CD8-positive, alpha-beta memory T cell (primary cell): ENCODE measurements at regions of chr1 and their contacts with region 1.

Region 1: GRCh38 chr1:248837794-248838356 is at the start of gene ZNF672:
- DNase-seq: peak; percentile 91 to 96 (median 92)
- H3K4me3 ChIP-seq: peak within 1 kb of the TSS; percentile 74
- H3K4me3 Mint-ChIP-seq: no peak within 1 kb of the TSS
- H3K27ac ChIP-seq: peak within 1 kb of the TSS; percentile 97
- H3K27ac Mint-ChIP-seq: peak within 1 kb of the TSS in 5 of 8 donors; percentile 98 to 100 (median 99)
- H3K4me1 ChIP-seq: peaks cover 28% of the 10 kb centered on the region
- H3K4me1 Mint-ChIP-seq: peaks cover 24 to 37% (median 36%) of the 10 kb centered on the region in 3 donors
- H3K27me3 ChIP-seq: no peaks in the 10 kb centered on the region
- H3K27me3 Mint-ChIP-seq: peaks cover 0 to 4% of the 10 kb centered on the region in 2 donors
- total RNA-seq, gene ZNF672: 52.1 to 55.2 TPM

Region 2: GRCh38 chr1:248825909-248826760 is 11.7 kb before region 1 on chr1 and contains the start of gene SH3BP5L:
- CTCF ChIA-PET with region 1: interaction called, 49 read pairs
- POLR2A ChIA-PET with region 1: interaction called, 31 read pairs
- DNase-seq: peak; percentile 84 to 94 (median 92)
- H3K4me3 ChIP-seq: peak within 1 kb of the TSS; percentile 98
- H3K4me3 Mint-ChIP-seq: peak within 1 kb of the TSS; percentile 89 to 99 (median 97)
- H3K27ac ChIP-seq: peak within 1 kb of the TSS; percentile 97
- H3K27ac Mint-ChIP-seq: peak within 1 kb of the TSS; percentile 92 to 100 (median 99)
- H3K4me1 ChIP-seq: peaks cover 51% of the 10 kb centered on the region
- H3K4me1 Mint-ChIP-seq: peaks cover 49 to 61% (median 60%) of the 10 kb centered on the region in 3 donors
- H3K27me3 ChIP-seq: no peaks in the 10 kb centered on the region
- H3K27me3 Mint-ChIP-seq: peaks cover 0 to 3% of the 10 kb centered on the region in 2 donors
- total RNA-seq, gene SH3BP5L: 20.1 to 21.8 TPM

Region 3: GRCh38 chr1:248858891-248859889 is 21.3 kb after region 1 on chr1 and contains the start of gene ZNF692:
- CTCF ChIA-PET with region 1: interaction called, 41 read pairs
- POLR2A ChIA-PET with region 1: interaction called, 57 read pairs
- DNase-seq: peak; percentile 94 to 99 (median 97)
- H3K4me3 ChIP-seq: peak within 1 kb of the TSS; percentile 71
- H3K4me3 Mint-ChIP-seq: peak within 1 kb of the TSS; percentile 82 to 94 (median 89)
- H3K27ac ChIP-seq: peak within 1 kb of the TSS; percentile 77
- H3K27ac Mint-ChIP-seq: peak within 1 kb of the TSS; percentile 90 to 97 (median 95)
- H3K4me1 ChIP-seq: peaks cover 58% of the 10 kb centered on the region
- H3K4me1 Mint-ChIP-seq: peaks cover 47 to 59% (median 58%) of the 10 kb centered on the region in 3 donors
- H3K27me3 ChIP-seq: no peaks in the 10 kb centered on the region
- H3K27me3 Mint-ChIP-seq: no peaks in the 10 kb centered on the region
- total RNA-seq, gene ZNF692: 56.0 to 58.7 TPM

Region 4: DNA sequence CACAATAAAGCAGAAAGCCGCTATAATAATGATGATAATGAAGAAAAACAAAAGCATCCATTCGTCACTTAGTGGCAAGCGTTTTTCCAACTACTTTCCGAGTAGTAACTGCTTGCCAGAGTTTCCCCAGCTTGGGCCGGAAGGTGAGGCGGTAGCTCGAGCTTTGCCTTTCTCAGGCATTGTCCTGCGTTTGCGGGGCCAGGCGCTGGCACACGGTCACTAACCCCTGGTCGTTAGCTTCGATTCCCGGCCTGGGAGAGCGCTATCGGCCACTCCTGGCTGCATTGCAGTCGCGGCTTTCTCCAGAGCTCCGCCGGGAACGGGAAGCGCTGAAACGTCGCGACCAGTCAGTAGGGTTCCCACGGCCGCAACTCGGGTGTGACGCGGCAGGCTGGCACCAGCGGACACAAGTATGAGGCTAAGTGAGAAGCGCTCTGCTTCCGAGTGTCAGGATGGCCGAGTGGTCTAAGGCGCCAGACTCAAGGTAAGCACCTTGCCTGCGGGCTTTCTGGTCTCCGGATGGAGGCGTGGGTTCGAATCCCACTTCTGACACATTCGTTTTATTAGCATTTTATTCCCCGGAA is 35.6 kb after region 1 on chr1:
- CTCF ChIA-PET with region 1: interaction called, 3 read pairs
- POLR2A ChIA-PET with region 1: interaction called, 16 read pairs
- DNase-seq: peak; percentile 81 to 96 (median 91)
- H3K4me3 ChIP-seq: peak overlapping the region; percentile 88
- H3K4me3 Mint-ChIP-seq: peak overlapping the region; percentile 93 to 99 (median 97)
- H3K27ac ChIP-seq: peak overlapping the region; percentile 87
- H3K27ac Mint-ChIP-seq: peak overlapping the region; percentile 92 to 100 (median 99)
- H3K4me1 ChIP-seq: no peaks in the 10 kb centered on the region
- H3K4me1 Mint-ChIP-seq: peaks cover 28 to 49% (median 41%) of the 10 kb centered on the region in 3 donors
- H3K27me3 ChIP-seq: no peaks in the 10 kb centered on the region
- H3K27me3 Mint-ChIP-seq: peaks cover 0 to 14% of the 10 kb centered on the region in 2 donors